PC-9 (cell line): ENCODE measurements at regions of chr2 and their contacts with region 1.

Region 1: DNA sequence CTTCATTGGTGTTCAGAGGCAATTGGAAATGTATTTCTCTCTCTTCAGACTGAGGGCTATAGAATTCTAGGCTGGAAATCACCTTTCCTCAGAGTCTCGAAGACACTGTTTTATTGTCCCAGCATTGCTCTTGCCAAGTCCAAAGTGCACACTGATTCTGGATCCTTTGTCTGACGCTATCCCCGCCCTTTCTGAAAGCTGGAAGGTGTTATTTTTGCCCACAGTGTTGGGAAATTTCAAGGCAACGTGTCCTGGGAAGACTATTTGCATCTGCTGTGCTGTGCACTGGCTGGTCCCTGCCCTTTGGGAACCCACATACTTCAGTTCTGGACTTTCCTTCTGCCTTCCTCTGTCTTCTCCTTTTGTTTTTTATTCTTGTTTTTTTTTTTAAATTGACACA is 190.8 kb downstream of the SH3BP4 start:
- DNase-seq: no peak
- H3K4me3 ChIP-seq: no peak overlapping the region
- H3K27ac ChIP-seq: no peak overlapping the region
- H3K4me1 ChIP-seq: no peaks in the 10 kb centered on the region
- H3K27me3 ChIP-seq: no peaks in the 10 kb centered on the region
- CTCF ChIP-seq: no peak

Region 2: GRCh38 chr2:235479604-235480003 is 337.0 kb after region 1 on chr2:
- CTCF ChIA-PET with region 1: no interaction called
- POLR2A ChIA-PET with region 1: interaction called, 13 read pairs
- intact Hi-C with region 1: no loop called
- DNase-seq: no peak
- H3K4me3 ChIP-seq: no peak overlapping the region
- H3K27ac ChIP-seq: no peak overlapping the region
- H3K4me1 ChIP-seq: no peaks in the 10 kb centered on the region
- H3K27me3 ChIP-seq: no peaks in the 10 kb centered on the region
- CTCF ChIP-seq: no peak

Region 3: DNA sequence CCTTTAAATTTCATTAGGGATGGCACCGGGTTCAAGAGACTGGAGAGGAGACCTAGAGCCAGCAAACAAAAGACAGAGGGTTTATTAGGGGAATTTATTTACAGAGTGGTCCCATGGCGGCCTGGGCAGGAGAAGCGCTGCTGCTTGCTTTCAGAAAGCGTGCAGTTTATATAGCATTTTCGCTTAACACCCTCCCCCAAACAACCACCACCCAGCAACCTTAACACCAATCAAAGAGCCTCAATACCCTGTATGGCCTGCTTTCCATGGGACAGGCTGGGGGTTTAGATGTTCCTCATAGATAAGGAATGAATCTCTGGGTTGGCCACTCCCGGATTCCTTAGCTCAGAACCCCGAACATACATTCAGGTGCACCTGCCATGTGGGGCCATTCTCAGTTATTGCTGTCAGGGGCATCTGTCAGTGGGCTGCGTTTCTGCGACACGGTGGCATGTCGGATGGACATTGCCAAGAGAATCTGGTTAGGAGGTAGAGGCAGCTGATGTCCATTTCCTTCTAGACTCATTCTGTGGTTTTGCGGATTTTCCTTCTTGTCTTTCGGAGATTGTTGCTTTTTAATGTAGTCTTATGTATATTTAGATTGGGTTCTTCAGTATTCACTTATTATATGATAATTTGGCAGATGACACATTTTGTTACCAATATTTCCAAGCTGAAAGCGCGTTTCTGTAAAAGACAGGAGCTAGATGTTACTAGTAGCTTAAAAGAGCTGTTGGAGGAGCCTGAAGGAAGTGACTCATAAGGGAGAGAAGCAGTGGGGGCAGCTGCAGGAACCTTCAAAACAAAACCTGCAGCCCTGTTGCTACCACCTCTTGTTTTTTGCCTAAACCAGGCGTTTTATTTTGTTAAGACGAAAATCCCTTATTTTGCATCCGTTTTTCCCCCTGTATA is 358.4 kb after region 1 on chr2:
- CTCF ChIA-PET with region 1: no interaction called
- POLR2A ChIA-PET with region 1: interaction called, 10 read pairs
- intact Hi-C with region 1: no loop called
- DNase-seq: peak; percentile 48 to 76
- H3K4me3 ChIP-seq: peak overlapping the region; percentile 29; the same call in 1 of the 2 replicates
- H3K27ac ChIP-seq: peak overlapping the region; percentile 61
- H3K4me1 ChIP-seq: peaks cover 65% of the 10 kb centered on the region
- H3K27me3 ChIP-seq: no peaks in the 10 kb centered on the region
- CTCF ChIP-seq: no peak